ENCODE measurements at regions of chr11 and their contacts with region 1.

Region 1: GRCh38 chr11:8247312-8247711 is 16.4 kb downstream of the LMO1 start:
- DNase-seq: peak; percentile 74
- ATAC-seq: peak; percentile 43
- H3K4me3 Mint-ChIP-seq: no peak overlapping the region
- H3K27ac Mint-ChIP-seq: no peak overlapping the region
- H3K4me1 Mint-ChIP-seq: peaks cover 13% of the 10 kb centered on the region
- H3K27me3 Mint-ChIP-seq: no peaks in the 10 kb centered on the region; the same call in 1 of the 2 replicates
- CTCF ChIP-seq: peak; percentile 49

Region 2: DNA sequence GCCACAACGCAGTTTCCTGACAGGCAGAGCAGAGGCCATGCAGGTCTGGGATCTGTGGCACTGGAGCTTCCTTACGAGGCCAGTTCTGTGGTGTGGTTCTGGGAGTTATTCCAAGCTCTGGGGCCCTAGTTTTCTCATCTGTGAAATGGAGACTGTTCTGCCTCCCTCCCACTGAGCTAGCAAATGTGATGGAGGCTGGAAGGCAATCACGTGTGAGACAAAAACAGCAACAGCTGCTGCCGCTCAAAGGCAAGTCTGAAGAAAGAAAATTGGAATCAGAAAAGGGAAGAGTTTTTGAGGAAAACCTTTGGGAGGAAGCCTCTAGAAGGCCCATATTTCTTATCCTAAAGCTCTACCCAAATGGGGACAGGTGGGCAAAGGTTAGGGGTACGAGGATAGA is 70.2 kb before region 1 on chr11:
- CTCF ChIA-PET with region 1: no interaction called
- POLR2A ChIA-PET with region 1: no interaction called
- DNase-seq: no peak
- ATAC-seq: no peak
- H3K4me3 Mint-ChIP-seq: no peak overlapping the region
- H3K27ac Mint-ChIP-seq: no peak overlapping the region
- H3K4me1 Mint-ChIP-seq: no peaks in the 10 kb centered on the region; the same call in 1 of the 2 replicates
- H3K27me3 Mint-ChIP-seq: peaks cover 33% of the 10 kb centered on the region
- CTCF ChIP-seq: no peak

Region 3: GRCh38 chr11:8219257-8220021 is 27.9 kb before region 1 on chr11:
- CTCF ChIA-PET with region 1: interaction called, 16 read pairs
- POLR2A ChIA-PET with region 1: no interaction called
- DNase-seq: peak; percentile 75
- ATAC-seq: peak; percentile 92
- H3K4me3 Mint-ChIP-seq: no peak overlapping the region
- H3K27ac Mint-ChIP-seq: no peak overlapping the region
- H3K4me1 Mint-ChIP-seq: peaks cover 12% of the 10 kb centered on the region
- H3K27me3 Mint-ChIP-seq: no peaks in the 10 kb centered on the region; the same call in 1 of the 2 replicates
- CTCF ChIP-seq: peak; percentile 54

Region 4: DNA sequence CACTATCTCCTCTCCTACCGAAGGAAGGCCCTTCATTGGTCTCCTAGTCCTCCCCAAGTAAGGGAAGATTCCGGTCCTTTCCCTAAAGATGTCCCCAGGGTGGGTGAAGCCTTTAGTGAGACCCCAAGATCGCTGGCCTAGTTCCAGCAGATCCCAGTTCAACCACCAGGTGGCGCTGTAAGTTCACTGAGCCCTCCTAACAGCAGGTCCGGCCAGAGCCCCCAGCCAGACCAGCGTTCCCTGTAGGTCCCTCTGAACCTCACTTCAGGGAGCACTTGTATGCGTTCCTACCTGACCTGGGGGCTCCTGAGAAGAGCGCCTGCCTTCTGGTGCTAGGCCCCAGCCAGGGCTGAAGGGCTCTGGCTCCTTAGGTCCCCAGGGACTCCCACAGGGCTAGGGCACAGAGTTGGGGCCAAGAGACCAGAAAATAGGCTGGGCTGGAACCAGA is 21.7 kb before region 1 on chr11:
- CTCF ChIA-PET with region 1: interaction called, 21 read pairs
- POLR2A ChIA-PET with region 1: no interaction called
- DNase-seq: peak; percentile 96
- ATAC-seq: peak; percentile 84
- H3K4me3 Mint-ChIP-seq: no peak overlapping the region
- H3K27ac Mint-ChIP-seq: no peak overlapping the region
- H3K4me1 Mint-ChIP-seq: peaks cover 16% of the 10 kb centered on the region
- H3K27me3 Mint-ChIP-seq: peaks cover 3% of the 10 kb centered on the region; the same call in 1 of the 2 replicates
- CTCF ChIP-seq: peak; percentile 98